CD4-positive, alpha-beta T cell (primary cell): ENCODE measurements at regions of chr6 and their contacts with region 1.

Region 1: GRCh38 chr6:30616811-30617564 is at the start of gene PPP1R10:
- DNase-seq: peak; percentile 93 to 100 (median 98)
- ATAC-seq: peak; percentile 70
- H3K4me3 ChIP-seq: peak within 1 kb of the TSS; percentile 76
- H3K4me3 Mint-ChIP-seq: peak within 1 kb of the TSS; percentile 100
- H3K27ac ChIP-seq: peak within 1 kb of the TSS; percentile 94 to 98
- H3K27ac Mint-ChIP-seq: peak within 1 kb of the TSS; percentile 99
- H3K4me1 ChIP-seq: peaks cover 34% of the 10 kb centered on the region
- H3K4me1 Mint-ChIP-seq: peaks cover 32% of the 10 kb centered on the region
- H3K27me3 ChIP-seq: no peaks in the 10 kb centered on the region
- H3K27me3 Mint-ChIP-seq: peaks cover 5% of the 10 kb centered on the region
- CTCF ChIP-seq: no peak
- total RNA-seq, gene PPP1R10: 92.2 to 95.3 TPM

Region 2: DNA sequence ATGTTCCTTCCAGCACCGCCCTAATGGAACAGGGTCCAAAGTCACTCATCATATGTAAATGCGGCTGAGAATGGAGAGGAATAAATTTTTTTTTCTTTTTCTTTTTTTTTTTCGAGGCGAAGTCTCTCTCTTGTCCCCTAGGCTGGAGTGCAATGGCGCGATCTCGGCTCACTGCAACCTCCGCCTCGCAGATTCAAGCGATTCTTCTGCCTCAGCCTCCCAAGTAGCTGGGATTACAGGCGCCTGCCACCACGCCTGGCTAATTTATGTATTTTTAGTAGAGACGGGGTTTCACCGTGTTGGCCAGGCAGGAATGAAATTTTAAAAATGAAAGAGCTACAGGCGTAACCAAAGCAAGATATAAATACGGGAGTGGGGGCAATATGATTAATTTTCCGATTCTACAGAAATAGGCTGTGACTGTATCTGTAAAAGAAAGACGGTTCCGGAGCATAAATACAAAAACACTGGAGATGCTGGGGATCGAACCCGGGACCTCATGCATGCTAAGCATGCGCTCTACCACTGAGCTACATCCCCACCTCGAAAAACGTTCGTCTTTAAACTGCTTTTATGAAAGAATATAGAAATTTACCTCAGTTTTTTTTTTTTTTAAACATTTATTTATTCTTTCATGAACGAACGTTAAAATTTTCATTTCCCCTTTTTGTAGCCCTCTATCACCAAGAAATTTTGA is 1959.1 kb before region 1 on chr6:
- CTCF ChIA-PET with region 1: no interaction called
- POLR2A ChIA-PET with region 1: no interaction called
- intact Hi-C with region 1: no loop called
- DNase-seq: peak in 9 of 14 experiments; percentile 15 to 60 (median 27)
- ATAC-seq: peak; percentile 68
- H3K4me3 ChIP-seq: peak overlapping the region; percentile 8
- H3K4me3 Mint-ChIP-seq: peak overlapping the region; percentile 93
- H3K27ac ChIP-seq: no peak overlapping the region
- H3K27ac Mint-ChIP-seq: peak overlapping the region; percentile 86
- H3K4me1 ChIP-seq: peaks cover 11% of the 10 kb centered on the region
- H3K4me1 Mint-ChIP-seq: peaks cover 28% of the 10 kb centered on the region
- H3K27me3 ChIP-seq: peaks cover 42 to 61% of the 10 kb centered on the region in 2 experiments
- H3K27me3 Mint-ChIP-seq: peaks cover 74% of the 10 kb centered on the region
- CTCF ChIP-seq: no peak

Region 3: GRCh38 chr6:30212865-30213666 is 403.9 kb before region 1 on chr6 and contains the start of gene TRIM26:
- CTCF ChIA-PET with region 1: no interaction called
- POLR2A ChIA-PET with region 1: interaction called, 14 read pairs
- intact Hi-C with region 1: no loop called
- DNase-seq: peak; percentile 92 to 99 (median 95)
- ATAC-seq: peak; percentile 86
- H3K4me3 ChIP-seq: peak within 1 kb of the TSS; percentile 90
- H3K4me3 Mint-ChIP-seq: peak within 1 kb of the TSS; percentile 96
- H3K27ac ChIP-seq: peak within 1 kb of the TSS; percentile 98 to 99
- H3K27ac Mint-ChIP-seq: peak within 1 kb of the TSS; percentile 100
- H3K4me1 ChIP-seq: peaks cover 39% of the 10 kb centered on the region
- H3K4me1 Mint-ChIP-seq: peaks cover 55% of the 10 kb centered on the region
- H3K27me3 ChIP-seq: no peaks in the 10 kb centered on the region
- H3K27me3 Mint-ChIP-seq: no peaks in the 10 kb centered on the region
- CTCF ChIP-seq: no peak
- total RNA-seq, gene TRIM26: 42.1 to 44.1 TPM

Region 4: DNA sequence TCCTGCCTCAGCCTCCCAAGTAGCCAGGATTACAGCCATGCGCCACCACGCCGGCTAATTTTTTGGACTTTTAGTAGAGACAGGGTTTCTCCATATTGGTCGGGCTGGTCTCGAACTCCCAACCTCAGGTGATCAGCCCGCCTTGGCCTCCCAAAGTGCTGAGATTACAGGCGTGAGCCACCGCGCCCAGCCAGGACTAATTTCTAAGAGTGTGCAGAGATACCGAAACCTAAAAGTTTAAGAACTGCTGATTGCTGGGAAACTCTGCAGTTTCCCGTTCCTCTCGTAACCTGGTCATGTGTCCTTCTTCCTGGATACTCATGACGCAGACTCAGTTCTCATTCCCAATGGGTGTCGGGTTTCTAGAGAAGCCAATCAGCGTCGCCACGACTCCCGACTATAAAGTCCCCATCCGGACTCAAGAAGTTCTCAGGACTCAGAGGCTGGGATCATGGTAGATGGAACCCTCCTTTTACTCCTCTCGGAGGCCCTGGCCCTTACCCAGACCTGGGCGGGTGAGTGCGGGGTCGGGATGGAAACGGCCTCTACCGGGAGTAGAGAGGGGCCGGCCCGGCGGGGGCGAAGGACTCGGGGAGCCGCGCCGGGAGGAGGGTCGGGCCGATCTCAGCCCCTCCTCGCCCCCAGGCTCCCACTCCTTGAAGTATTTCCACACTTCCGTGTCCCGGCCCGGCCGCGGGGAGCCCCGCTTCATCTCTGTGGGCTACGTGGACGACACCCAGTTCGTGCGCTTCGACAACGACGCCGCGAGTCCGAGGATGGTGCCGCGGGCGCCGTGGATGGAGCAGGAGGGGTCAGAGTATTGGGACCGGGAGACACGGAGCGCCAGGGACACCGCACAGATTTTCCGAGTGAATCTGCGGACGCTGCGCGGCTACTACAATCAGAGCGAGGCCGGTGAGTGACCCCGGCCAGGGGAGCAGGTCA is 127.6 kb before region 1 on chr6 and contains the start of gene HLA-E:
- CTCF ChIA-PET with region 1: interaction called, 8 read pairs
- POLR2A ChIA-PET with region 1: interaction called, 56 read pairs
- intact Hi-C with region 1: loop called (anchors 2 to 5 kb)
- DNase-seq: peak; percentile 74 to 99 (median 88)
- ATAC-seq: peak; percentile 80
- H3K4me3 ChIP-seq: peak within 1 kb of the TSS; percentile 83
- H3K4me3 Mint-ChIP-seq: peak within 1 kb of the TSS; percentile 100
- H3K27ac ChIP-seq: peak within 1 kb of the TSS; percentile 95 to 96
- H3K27ac Mint-ChIP-seq: peak within 1 kb of the TSS; percentile 98
- H3K4me1 ChIP-seq: peaks cover 59% of the 10 kb centered on the region
- H3K4me1 Mint-ChIP-seq: peaks cover 62% of the 10 kb centered on the region
- H3K27me3 ChIP-seq: no peaks in the 10 kb centered on the region
- H3K27me3 Mint-ChIP-seq: no peaks in the 10 kb centered on the region
- CTCF ChIP-seq: no peak
- total RNA-seq, gene HLA-E: 1,136 to 1,173 TPM

Region 5: GRCh38 chr6:30541515-30542403 is 75.2 kb before region 1 on chr6:
- CTCF ChIA-PET with region 1: interaction called, 19 read pairs
- POLR2A ChIA-PET with region 1: interaction called, 56 read pairs
- intact Hi-C with region 1: no loop called
- DNase-seq: peak; percentile 69 to 93 (median 76)
- ATAC-seq: peak; percentile 68
- H3K4me3 ChIP-seq: peak overlapping the region; percentile 53
- H3K4me3 Mint-ChIP-seq: peak overlapping the region; percentile 86
- H3K27ac ChIP-seq: peak overlapping the region; percentile 52 to 68
- H3K27ac Mint-ChIP-seq: peak overlapping the region; percentile 91
- H3K4me1 ChIP-seq: peaks cover 33% of the 10 kb centered on the region
- H3K4me1 Mint-ChIP-seq: peaks cover 36% of the 10 kb centered on the region
- H3K27me3 ChIP-seq: no peaks in the 10 kb centered on the region
- H3K27me3 Mint-ChIP-seq: no peaks in the 10 kb centered on the region
- CTCF ChIP-seq: peak; percentile 98

Region 6: GRCh38 chr6:30578051-30578450 is 38.9 kb before region 1 on chr6:
- CTCF ChIA-PET with region 1: no interaction called
- POLR2A ChIA-PET with region 1: interaction called, 22 read pairs
- intact Hi-C with region 1: no loop called
- DNase-seq: no peak
- ATAC-seq: no peak
- H3K4me3 ChIP-seq: no peak overlapping the region
- H3K4me3 Mint-ChIP-seq: no peak overlapping the region
- H3K27ac ChIP-seq: no peak overlapping the region
- H3K27ac Mint-ChIP-seq: peak overlapping the region; percentile 4
- H3K4me1 ChIP-seq: peaks cover 22% of the 10 kb centered on the region
- H3K4me1 Mint-ChIP-seq: peaks cover 25% of the 10 kb centered on the region
- H3K27me3 ChIP-seq: no peaks in the 10 kb centered on the region
- H3K27me3 Mint-ChIP-seq: no peaks in the 10 kb centered on the region
- CTCF ChIP-seq: no peak

Region 7: GRCh38 chr6:30646458-30647241 is 29.7 kb after region 1 on chr6 and contains the start of gene C6orf136:
- CTCF ChIA-PET with region 1: interaction called, 3 read pairs
- POLR2A ChIA-PET with region 1: interaction called, 10 read pairs
- intact Hi-C with region 1: loop called in 1 of 2 experiments (anchors 1 kb)
- DNase-seq: peak; percentile 84 to 99 (median 94)
- ATAC-seq: peak; percentile 79
- H3K4me3 ChIP-seq: peak within 1 kb of the TSS; percentile 85
- H3K4me3 Mint-ChIP-seq: peak within 1 kb of the TSS; percentile 93
- H3K27ac ChIP-seq: peak within 1 kb of the TSS; percentile 86 to 91
- H3K27ac Mint-ChIP-seq: peak within 1 kb of the TSS; percentile 89
- H3K4me1 ChIP-seq: peaks cover 23% of the 10 kb centered on the region
- H3K4me1 Mint-ChIP-seq: peaks cover 23% of the 10 kb centered on the region
- H3K27me3 ChIP-seq: no peaks in the 10 kb centered on the region
- H3K27me3 Mint-ChIP-seq: no peaks in the 10 kb centered on the region
- CTCF ChIP-seq: no peak
- total RNA-seq, gene C6orf136: 20.3 to 21.7 TPM

Region 8: GRCh38 chr6:30717042-30717844 is 100.3 kb after region 1 on chr6 and contains the start of gene MDC1:
- CTCF ChIA-PET with region 1: interaction called, 9 read pairs
- POLR2A ChIA-PET with region 1: interaction called, 65 read pairs
- intact Hi-C with region 1: loop called (anchors 1 kb)
- DNase-seq: peak; percentile 96 to 100 (median 98)
- ATAC-seq: peak; percentile 73
- H3K4me3 ChIP-seq: peak within 1 kb of the TSS; percentile 81
- H3K4me3 Mint-ChIP-seq: peak within 1 kb of the TSS; percentile 95
- H3K27ac ChIP-seq: peak within 1 kb of the TSS; percentile 86 to 90
- H3K27ac Mint-ChIP-seq: peak within 1 kb of the TSS; percentile 96
- H3K4me1 ChIP-seq: peaks cover 42% of the 10 kb centered on the region
- H3K4me1 Mint-ChIP-seq: peaks cover 45% of the 10 kb centered on the region
- H3K27me3 ChIP-seq: no peaks in the 10 kb centered on the region
- H3K27me3 Mint-ChIP-seq: no peaks in the 10 kb centered on the region
- CTCF ChIP-seq: peak; percentile 45
- total RNA-seq, gene MDC1: 50.5 to 56.8 TPM